MCF 10A (cell line): ENCODE measurements at regions of chr4 and their contacts with region 1.

Region 1: DNA sequence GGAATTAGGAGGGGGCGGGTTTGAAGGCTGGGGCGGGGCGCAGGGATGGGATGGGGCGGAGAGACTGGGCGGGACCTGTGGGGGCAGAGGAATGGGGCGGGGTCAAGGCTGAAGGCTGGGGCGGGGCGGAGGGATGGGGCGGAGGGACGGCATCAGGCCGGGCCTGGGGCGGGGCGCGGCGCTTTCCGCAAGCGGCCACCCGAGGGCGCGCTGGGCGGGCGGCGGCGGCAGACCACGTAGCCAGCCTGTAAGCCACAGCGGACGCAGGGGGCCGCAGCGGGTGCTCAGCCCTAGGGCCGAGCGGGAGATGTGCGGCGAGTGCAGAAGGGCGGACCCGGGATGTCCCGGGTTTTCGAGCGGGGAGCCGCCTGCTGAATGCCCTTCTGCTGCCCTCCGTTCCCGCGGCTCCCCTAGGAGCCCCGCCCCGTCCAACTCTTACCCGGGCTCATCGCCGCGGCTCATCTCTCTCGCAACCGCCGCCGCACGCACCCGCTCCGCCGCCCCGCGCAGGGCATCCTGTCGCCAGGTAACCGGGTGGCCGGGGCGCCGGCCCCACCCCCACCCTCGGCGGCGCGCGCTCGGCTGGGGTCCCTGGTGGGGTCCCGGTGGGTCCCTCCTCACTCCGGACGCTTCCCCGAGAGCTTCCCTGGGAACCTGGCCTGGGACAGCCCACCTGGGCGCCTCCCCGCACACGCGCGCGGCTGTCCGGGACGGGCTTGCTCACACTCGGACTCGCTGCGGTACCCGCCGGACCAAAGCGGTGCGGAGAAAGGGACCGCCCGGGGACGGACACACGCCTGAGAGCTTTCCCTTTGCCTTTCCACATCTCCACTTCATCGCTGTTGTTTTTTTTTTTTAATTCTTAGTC is at the start of gene CCDC110:
- DNase-seq: peak; percentile 92
- H3K4me3 Mint-ChIP-seq: peak within 1 kb of the TSS; percentile 80
- H3K27ac Mint-ChIP-seq: no peak within 1 kb of the TSS
- H3K4me1 Mint-ChIP-seq: no peaks in the 10 kb centered on the region
- H3K27me3 Mint-ChIP-seq: peaks cover 43% of the 10 kb centered on the region
- CTCF ChIP-seq: peak; percentile 66
- total RNA-seq, gene CCDC110: 0.47 TPM in 1 of 2 replicates, not detected in the other

Region 2: DNA sequence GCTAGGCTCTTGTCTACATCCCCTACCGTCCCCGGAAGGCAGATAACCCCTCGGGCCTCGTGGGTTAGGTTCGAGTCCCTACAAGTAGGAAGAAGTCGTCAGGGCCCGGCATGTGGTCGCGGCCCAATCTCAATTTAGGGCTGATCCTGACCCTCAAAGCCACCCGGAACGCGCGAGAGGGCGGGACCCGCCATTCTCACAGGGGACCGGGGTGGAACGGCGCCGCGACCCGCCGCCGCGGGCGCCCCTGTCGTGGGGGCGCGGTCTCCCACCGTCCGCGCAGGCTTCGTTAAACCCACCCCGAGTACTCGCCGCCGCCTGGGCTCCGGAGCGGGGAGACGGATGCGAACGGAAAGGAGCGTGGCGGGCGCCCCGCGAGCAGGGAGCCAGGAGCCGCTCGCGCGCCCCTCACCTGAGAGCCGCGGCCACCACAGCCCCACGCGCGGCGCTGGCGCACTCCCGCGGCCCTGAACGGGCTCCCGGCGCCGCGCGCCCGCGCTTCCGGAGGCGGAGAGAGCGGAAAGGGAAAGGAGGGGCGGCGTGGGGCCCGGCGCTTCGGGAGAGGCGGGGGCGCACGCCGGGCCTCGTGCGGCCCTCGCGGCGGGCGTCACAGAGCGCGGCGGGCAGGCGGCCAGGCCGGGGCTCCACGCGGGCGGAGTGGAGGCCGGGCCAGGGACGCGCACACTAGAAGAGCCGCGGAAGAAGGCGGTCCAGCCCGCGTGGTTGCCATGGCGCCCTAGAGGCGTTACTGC is 267.8 kb before region 1 on chr4 and contains the start of gene CFAP97:
- CTCF ChIA-PET with region 1: no interaction called
- POLR2A ChIA-PET with region 1: no interaction called
- intact Hi-C with region 1: loop called (anchors 10 kb)
- DNase-seq: peak; percentile 86
- H3K4me3 Mint-ChIP-seq: peak within 1 kb of the TSS; percentile 90
- H3K27ac Mint-ChIP-seq: peak within 1 kb of the TSS; percentile 94
- H3K4me1 Mint-ChIP-seq: peaks cover 13% of the 10 kb centered on the region
- H3K27me3 Mint-ChIP-seq: no peaks in the 10 kb centered on the region
- CTCF ChIP-seq: no peak
- total RNA-seq, gene CFAP97: 80.2 and 95.0 TPM in 2 replicates

Region 3: DNA sequence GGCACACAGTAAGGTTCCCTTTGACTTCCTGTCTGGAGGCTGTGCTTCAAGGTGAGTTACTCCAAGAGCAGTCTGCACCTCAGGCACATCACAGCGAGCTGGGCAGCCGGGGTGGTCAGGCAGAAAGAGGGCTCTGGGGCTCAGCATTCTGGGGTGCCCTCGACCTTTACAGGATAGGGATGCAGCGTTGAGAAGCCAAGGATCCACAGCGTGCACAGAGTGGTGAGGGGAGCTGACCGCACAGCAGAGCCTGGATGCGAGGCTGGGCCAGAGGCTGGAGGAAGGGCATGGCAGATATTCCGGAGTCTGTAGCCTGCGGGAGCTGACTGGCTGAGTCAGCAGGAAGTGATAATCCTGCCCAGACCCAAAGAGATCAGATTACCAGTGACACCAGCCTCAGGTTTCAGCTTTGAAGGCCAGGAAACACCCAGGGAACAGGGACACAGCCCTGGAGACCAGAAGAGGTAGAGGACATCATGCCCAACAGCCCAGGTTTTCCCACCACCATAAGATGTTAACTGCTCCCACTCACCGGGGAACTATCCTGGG is 102.3 kb after region 1 on chr4:
- CTCF ChIA-PET with region 1: no interaction called
- POLR2A ChIA-PET with region 1: no interaction called
- intact Hi-C with region 1: loop called (anchors 1 kb)
- DNase-seq: peak; percentile 93
- H3K4me3 Mint-ChIP-seq: peak overlapping the region; percentile 69
- H3K27ac Mint-ChIP-seq: peak overlapping the region; percentile 46
- H3K4me1 Mint-ChIP-seq: peaks cover 9% of the 10 kb centered on the region
- H3K27me3 Mint-ChIP-seq: no peaks in the 10 kb centered on the region
- CTCF ChIP-seq: no peak